H1 (cell line): ENCODE measurements at regions of chr9 and their contacts with region 1.

Region 1: GRCh38 chr9:73269430-73270101 is 117.9 kb downstream of the ANXA1 start:
- DNase-seq: no peak
- H3K4me3 ChIP-seq: no peak overlapping the region
- H3K27ac ChIP-seq: no peak overlapping the region
- H3K4me1 ChIP-seq: peaks cover 0 to 4% (median 0%) of the 10 kb centered on the region in 4 experiments; a peak in 1 of 7 replicates
- H3K27me3 ChIP-seq: no peaks in the 10 kb centered on the region
- CTCF ChIP-seq: peak in 1 of 3 experiments; percentile 16; a peak in 1 of 4 replicates
- EP300 ChIP-seq: no peak
- POLR2A ChIP-seq: no peak
- RAD21 ChIP-seq: peak; percentile 43 to 58

Region 2: DNA sequence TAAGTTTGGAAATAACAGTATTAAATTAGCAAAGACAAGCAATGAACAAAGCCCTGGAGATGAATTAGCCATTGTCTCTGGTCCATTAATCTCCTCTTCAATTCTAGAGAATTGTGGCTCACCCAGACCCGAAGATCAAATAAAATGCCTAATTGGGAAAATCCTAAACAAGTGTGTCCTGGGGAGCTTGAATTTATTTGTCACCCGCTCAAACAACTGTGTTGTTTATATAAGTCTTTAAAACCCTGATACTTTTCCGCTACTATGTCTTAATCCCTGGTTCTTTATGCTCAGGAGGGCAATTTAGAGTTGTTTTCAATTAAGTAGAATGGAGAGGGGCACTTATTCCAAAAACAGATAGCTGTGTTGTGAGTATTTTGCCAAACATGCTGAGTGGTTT is 10.5 kb after region 1 on chr9:
- CTCF ChIA-PET with region 1: interaction called, 24 read pairs
- POLR2A ChIA-PET with region 1: no interaction called
- DNase-seq: no peak
- H3K4me3 ChIP-seq: no peak overlapping the region
- H3K27ac ChIP-seq: no peak overlapping the region
- H3K4me1 ChIP-seq: no peaks in the 10 kb centered on the region
- H3K27me3 ChIP-seq: no peaks in the 10 kb centered on the region
- CTCF ChIP-seq: no peak
- EP300 ChIP-seq: no peak
- POLR2A ChIP-seq: no peak
- RAD21 ChIP-seq: no peak

Region 3: DNA sequence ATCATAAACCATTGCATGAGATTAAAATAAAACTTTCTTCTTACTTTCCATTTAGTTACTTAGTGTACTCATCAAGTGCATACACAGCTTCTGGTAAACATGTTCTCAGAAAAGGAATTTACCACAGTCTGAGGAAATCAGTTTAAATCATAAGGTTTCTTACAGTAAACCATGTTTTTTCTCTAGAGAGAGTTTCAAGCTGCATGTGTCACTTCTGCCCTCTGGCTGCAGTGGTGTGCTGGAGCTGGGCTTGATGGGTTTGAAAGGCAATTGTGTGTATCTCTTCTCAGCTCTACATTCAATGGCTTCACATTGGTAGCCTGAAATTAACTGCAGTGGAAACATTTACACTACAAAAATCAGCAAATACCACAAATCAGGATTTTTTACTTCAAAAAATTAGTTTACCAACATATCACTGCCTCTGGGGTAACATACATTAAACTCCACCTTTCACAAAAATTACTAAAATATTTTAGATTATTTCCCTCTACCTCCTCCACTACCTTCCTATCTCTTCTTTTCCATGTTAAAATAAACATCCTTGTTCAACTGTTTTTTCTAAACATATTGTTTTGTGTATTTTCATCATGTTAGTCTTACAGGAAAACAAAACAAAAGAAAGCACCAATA is 296.4 kb after region 1 on chr9:
- CTCF ChIA-PET with region 1: interaction called, 13 read pairs
- POLR2A ChIA-PET with region 1: no interaction called
- DNase-seq: peak in 1 of 2 experiments; percentile 25
- H3K4me3 ChIP-seq: no peak overlapping the region
- H3K27ac ChIP-seq: no peak overlapping the region
- H3K4me1 ChIP-seq: no peaks in the 10 kb centered on the region
- H3K27me3 ChIP-seq: no peaks in the 10 kb centered on the region
- CTCF ChIP-seq: peak; percentile 71 to 85 (median 71)
- EP300 ChIP-seq: no peak
- POLR2A ChIP-seq: no peak
- RAD21 ChIP-seq: peak; percentile 89 to 91